ENCODE measurements at regions of chr20 and their contacts with region 1.

Region 1: GRCh38 chr20:1671891-1672669 is 14.5 kb upstream of the SIRPG start:
- DNase-seq: peak; percentile 64
- H3K4me3 Mint-ChIP-seq: peak overlapping the region; percentile 47
- H3K27ac Mint-ChIP-seq: peak overlapping the region; percentile 97
- H3K4me1 Mint-ChIP-seq: peaks cover 97% of the 10 kb centered on the region
- H3K27me3 Mint-ChIP-seq: no peaks in the 10 kb centered on the region

Region 2: DNA sequence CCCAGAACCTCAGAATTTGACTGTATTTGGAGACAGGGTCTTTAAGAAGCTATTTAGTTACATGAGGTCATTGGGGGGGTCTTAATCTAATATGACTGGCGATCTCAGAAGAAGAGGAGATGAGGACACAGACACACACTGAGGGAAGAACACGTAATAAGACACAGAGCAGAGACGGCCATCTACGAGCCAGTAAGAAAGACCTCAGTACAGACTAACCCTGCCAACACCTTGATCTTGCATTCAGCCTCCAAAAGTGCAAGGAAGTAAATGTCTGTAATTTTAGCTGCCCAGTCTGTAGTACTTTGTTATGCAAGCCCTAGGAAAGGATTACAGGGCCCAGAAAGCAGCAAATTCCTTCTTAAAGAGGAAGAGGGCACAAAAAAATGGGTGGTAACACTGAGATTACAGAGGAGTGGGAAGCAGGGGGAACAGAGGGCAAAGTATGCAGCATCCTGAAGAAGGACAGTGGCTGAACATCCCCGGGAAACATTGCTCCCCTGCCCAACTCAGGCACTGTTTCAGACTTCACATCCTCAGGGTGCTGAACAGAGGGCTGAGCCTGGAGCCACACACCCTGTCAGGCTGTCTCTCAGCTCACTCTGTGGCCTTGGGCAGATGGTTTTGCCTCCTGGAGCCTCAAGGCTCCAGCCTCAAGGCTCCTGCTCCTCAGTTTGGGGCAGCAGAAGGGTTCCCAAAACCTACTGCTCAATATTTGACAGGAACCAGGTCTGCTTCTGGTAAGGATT is 13.4 kb after region 1 on chr20:
- CTCF ChIA-PET with region 1: interaction called, 3 read pairs
- POLR2A ChIA-PET with region 1: interaction called, 4 read pairs
- intact Hi-C with region 1: loop called (anchors 1 kb)
- DNase-seq: no peak
- H3K4me3 Mint-ChIP-seq: peak overlapping the region; percentile 65
- H3K27ac Mint-ChIP-seq: peak overlapping the region; percentile 64
- H3K4me1 Mint-ChIP-seq: peaks cover 56% of the 10 kb centered on the region
- H3K27me3 Mint-ChIP-seq: no peaks in the 10 kb centered on the region